Esophagus squamous epithelium (tissue), 5 donors: ENCODE measurements at regions of chr14 and their contacts with region 1.

Region 1: GRCh38 chr14:99982537-99983250 is 82.5 kb upstream of the EVL start:
- DNase-seq: no peak
- H3K4me3 ChIP-seq: no peak overlapping the region
- H3K27ac ChIP-seq: no peak overlapping the region
- H3K4me1 ChIP-seq: peaks cover 0 to 35% (median 4%) of the 10 kb centered on the region in 3 donors
- H3K27me3 ChIP-seq: no peaks in the 10 kb centered on the region
- CTCF ChIP-seq: peak; percentile 72 to 87 (median 84)
- POLR2A ChIP-seq: no peak

Region 2: DNA sequence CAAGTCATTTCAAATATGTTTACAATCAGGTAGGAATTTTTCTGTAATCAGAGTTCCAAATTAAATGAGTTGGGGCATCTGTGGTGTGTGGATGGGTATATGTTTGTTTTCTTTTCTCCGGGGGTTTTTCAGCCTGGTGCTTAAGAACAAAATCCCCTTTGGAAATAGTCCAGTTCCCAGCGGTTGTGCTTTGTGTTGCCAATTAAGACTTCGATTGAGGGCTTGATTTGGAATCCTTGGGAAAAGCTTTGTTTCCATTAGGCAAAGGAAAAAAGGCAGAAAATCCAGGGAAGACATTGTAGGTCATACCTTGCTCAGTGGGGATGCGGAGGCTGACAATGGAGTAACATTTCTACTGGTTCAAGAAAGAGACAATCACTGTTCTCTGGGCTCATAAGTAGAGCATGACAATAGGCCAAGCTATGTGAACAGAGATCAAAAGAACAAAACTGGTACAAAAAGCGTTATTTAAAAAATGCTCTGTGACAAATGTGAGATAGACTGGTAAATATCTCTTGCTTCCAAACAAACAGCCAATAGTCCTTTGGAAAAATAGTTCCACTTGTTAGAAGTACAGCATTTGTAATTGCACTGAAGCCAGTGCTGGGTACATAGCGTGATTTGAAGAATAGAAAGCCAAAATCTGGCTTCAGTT is 109.8 kb before region 1 on chr14:
- intact Hi-C with region 1: no loop called
- DNase-seq: no peak
- H3K4me3 ChIP-seq: no peak overlapping the region
- H3K27ac ChIP-seq: no peak overlapping the region
- H3K4me1 ChIP-seq: no peaks in the 10 kb centered on the region
- H3K27me3 ChIP-seq: peaks cover 0 to 5% (median 0%) of the 10 kb centered on the region in 4 donors
- CTCF ChIP-seq: no peak
- POLR2A ChIP-seq: no peak

Region 3: GRCh38 chr14:100192672-100193416 is 210.2 kb after region 1 on chr14:
- intact Hi-C with region 1: loop called (anchors 5 kb)
- DNase-seq: peak; percentile 97
- H3K4me3 ChIP-seq: peak overlapping the region; percentile 31 to 67 (median 46)
- H3K27ac ChIP-seq: peak overlapping the region; percentile 93 to 94 (median 94)
- H3K4me1 ChIP-seq: peaks cover 19 to 51% (median 22%) of the 10 kb centered on the region in 3 donors
- H3K27me3 ChIP-seq: no peaks in the 10 kb centered on the region
- CTCF ChIP-seq: peak; percentile 81 to 98 (median 95)
- POLR2A ChIP-seq: peak in 1 of 4 donors; percentile 52